Ascending aorta (tissue), 2 donors: ENCODE measurements at regions of chr5 and their contacts with region 1.

Region 1: GRCh38 chr5:103475629-103476240 is 86.9 kb downstream of the NUDT12 start:
- DNase-seq: no peak
- H3K4me3 ChIP-seq: no peak overlapping the region
- H3K27ac ChIP-seq: no peak overlapping the region
- H3K4me1 ChIP-seq: no peaks in the 10 kb centered on the region
- H3K27me3 ChIP-seq: no peaks in the 10 kb centered on the region
- CTCF ChIP-seq: peak; percentile 25 to 74 (median 58)

Region 2: GRCh38 chr5:103232393-103232999 is 243.2 kb before region 1 on chr5:
- intact Hi-C with region 1: loop called (anchors 1 kb)
- DNase-seq: no peak
- H3K4me3 ChIP-seq: no peak overlapping the region
- H3K27ac ChIP-seq: no peak overlapping the region
- H3K4me1 ChIP-seq: peaks cover 0 to 6% of the 10 kb centered on the region in 2 donors
- H3K27me3 ChIP-seq: no peaks in the 10 kb centered on the region
- CTCF ChIP-seq: peak; percentile 60 to 84 (median 80)